SK-N-SH (cell line): ENCODE measurements at regions of chr11 and their contacts with region 1.

Region 1: GRCh38 chr11:12043959-12044819 is 35.8 kb upstream of the DKK3 start:
- DNase-seq: peak; percentile 74
- H3K4me3 ChIP-seq: peak overlapping the region in 1 of 2 experiments; percentile 29; a peak in 3 of 4 replicates
- H3K27ac ChIP-seq: peak overlapping the region; percentile 70 to 96; a peak in 3 of 4 replicates
- H3K4me1 ChIP-seq: peaks cover 6 to 16% of the 10 kb centered on the region in 2 experiments; a peak in 3 of 4 replicates
- H3K27me3 ChIP-seq: no peaks in the 10 kb centered on the region
- CTCF ChIP-seq: peak; percentile 97
- EP300 ChIP-seq: peak; percentile 16 to 95; a peak in 3 of 4 replicates
- RAD21 ChIP-seq: peak; percentile 95

Region 2: GRCh38 chr11:11793073-11793472 is 251.1 kb before region 1 on chr11:
- CTCF ChIA-PET with region 1: interaction called, 77 read pairs
- POLR2A ChIA-PET with region 1: no interaction called
- DNase-seq: no peak
- H3K4me3 ChIP-seq: no peak overlapping the region
- H3K27ac ChIP-seq: no peak overlapping the region
- H3K4me1 ChIP-seq: no peaks in the 10 kb centered on the region
- H3K27me3 ChIP-seq: no peaks in the 10 kb centered on the region; the same call in 1 of the 2 replicates
- CTCF ChIP-seq: no peak
- EP300 ChIP-seq: no peak
- RAD21 ChIP-seq: no peak

Region 3: GRCh38 chr11:11931461-11932055 is 112.6 kb before region 1 on chr11:
- CTCF ChIA-PET with region 1: interaction called, 93 read pairs
- POLR2A ChIA-PET with region 1: no interaction called
- DNase-seq: peak; percentile 47
- H3K4me3 ChIP-seq: no peak overlapping the region
- H3K27ac ChIP-seq: 0 out of 4 replicates have a peak overlapping the region, but pooled peaks of 1 of the 2 experiments have one; percentile 16
- H3K4me1 ChIP-seq: no peaks in the 10 kb centered on the region; a peak in 1 of 4 replicates
- H3K27me3 ChIP-seq: no peaks in the 10 kb centered on the region
- CTCF ChIP-seq: peak; percentile 82
- EP300 ChIP-seq: no peak
- RAD21 ChIP-seq: peak; percentile 89

Region 4: GRCh38 chr11:11966826-11967668 is 77.1 kb before region 1 on chr11:
- CTCF ChIA-PET with region 1: interaction called, 22 read pairs
- POLR2A ChIA-PET with region 1: no interaction called
- DNase-seq: peak; percentile 77
- H3K4me3 ChIP-seq: no peak overlapping the region; a peak in 1 of 4 replicates
- H3K27ac ChIP-seq: peak overlapping the region; percentile 85 to 100; a peak in 3 of 4 replicates
- H3K4me1 ChIP-seq: peaks cover 22 to 80% of the 10 kb centered on the region in 2 experiments
- H3K27me3 ChIP-seq: no peaks in the 10 kb centered on the region
- CTCF ChIP-seq: peak; percentile 76
- EP300 ChIP-seq: no peak
- RAD21 ChIP-seq: peak; percentile 64

Region 5: GRCh38 chr11:12029738-12030363 is 14.3 kb before region 1 on chr11:
- CTCF ChIA-PET with region 1: interaction called, 16 read pairs
- POLR2A ChIA-PET with region 1: no interaction called
- DNase-seq: no peak
- H3K4me3 ChIP-seq: no peak overlapping the region
- H3K27ac ChIP-seq: peak overlapping the region in 1 of 2 experiments; percentile 78; a peak in 2 of 4 replicates
- H3K4me1 ChIP-seq: peaks cover 9 to 15% of the 10 kb centered on the region in 2 experiments; a peak in 3 of 4 replicates
- H3K27me3 ChIP-seq: no peaks in the 10 kb centered on the region
- CTCF ChIP-seq: no peak
- EP300 ChIP-seq: peak in 1 of 2 experiments; percentile 32; a peak in 1 of 4 replicates
- RAD21 ChIP-seq: no peak

Region 6: GRCh38 chr11:12263141-12263693 is 219.0 kb after region 1 on chr11:
- CTCF ChIA-PET with region 1: interaction called, 10 read pairs
- POLR2A ChIA-PET with region 1: no interaction called
- DNase-seq: peak; percentile 66
- H3K4me3 ChIP-seq: no peak overlapping the region
- H3K27ac ChIP-seq: peak overlapping the region in 1 of 2 experiments; percentile 43; a peak in 1 of 4 replicates
- H3K4me1 ChIP-seq: peaks cover 0 to 20% of the 10 kb centered on the region in 2 experiments; a peak in 2 of 4 replicates
- H3K27me3 ChIP-seq: no peaks in the 10 kb centered on the region
- CTCF ChIP-seq: no peak
- EP300 ChIP-seq: no peak
- RAD21 ChIP-seq: no peak